Panc1 (cell line): ENCODE measurements at regions of chr12 and their contacts with region 1.

Region 1: GRCh38 chr12:98644711-98645402 is at the starts of genes APAF1 and IKBIP:
- DNase-seq: peak; percentile 74
- ATAC-seq: peak; percentile 95
- H3K4me3 ChIP-seq: peak within 1 kb of the TSS; percentile 86 to 87
- H3K27ac ChIP-seq: peak within 1 kb of the TSS; percentile 79
- H3K4me1 ChIP-seq: no peaks in the 10 kb centered on the region; the same call in 1 of the 2 replicates
- H3K27me3 ChIP-seq: no peaks in the 10 kb centered on the region
- CTCF ChIP-seq: no peak; the same call in 1 of the 2 replicates
- total RNA-seq, gene APAF1: 15.6 TPM
- total RNA-seq, gene IKBIP: 33.7 TPM

Region 2: DNA sequence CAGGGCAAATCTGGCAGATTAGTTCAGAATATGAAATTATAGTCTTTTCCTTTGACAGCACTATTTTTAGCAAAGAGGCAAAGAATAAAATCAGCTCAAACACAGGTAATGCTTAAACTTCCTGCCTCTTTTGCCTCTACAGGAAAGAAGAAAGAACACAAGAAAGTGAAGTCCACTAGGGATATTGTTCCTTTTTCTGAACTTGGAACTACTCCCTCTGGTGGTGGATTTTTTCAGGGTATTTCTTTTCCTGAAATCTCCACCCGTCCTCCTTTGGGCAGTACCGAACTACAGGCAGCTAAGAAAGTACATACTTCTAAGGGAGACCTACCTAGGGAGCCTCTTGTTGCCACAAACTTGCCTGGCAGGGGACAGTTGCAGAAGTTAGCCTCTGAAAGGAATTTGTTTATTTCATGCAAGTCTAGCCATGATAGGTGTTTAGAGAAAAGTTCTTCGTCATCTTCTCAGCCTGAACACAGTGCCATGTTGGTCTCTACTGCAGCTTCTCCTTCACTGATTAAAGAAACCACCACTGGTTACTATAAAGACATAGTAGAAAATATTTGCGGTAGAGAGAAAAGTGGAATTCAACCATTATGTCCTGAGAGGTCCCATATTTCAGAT is 112.1 kb before region 1 on chr12:
- CTCF ChIA-PET with region 1: no interaction called
- POLR2A ChIA-PET with region 1: no interaction called
- in situ Hi-C with region 1: no loop called
- intact Hi-C with region 1: no loop called
- DNase-seq: no peak
- ATAC-seq: peak; percentile 90
- H3K4me3 ChIP-seq: no peak overlapping the region
- H3K27ac ChIP-seq: no peak overlapping the region; the same call in 1 of the 2 replicates
- H3K4me1 ChIP-seq: no peaks in the 10 kb centered on the region
- H3K27me3 ChIP-seq: no peaks in the 10 kb centered on the region
- CTCF ChIP-seq: peak; percentile 82

Region 3: GRCh38 chr12:98671459-98671858 is 26.6 kb after region 1 on chr12:
- CTCF ChIA-PET with region 1: interaction called, 4 read pairs
- POLR2A ChIA-PET with region 1: interaction called, 10 read pairs
- in situ Hi-C with region 1: no loop called
- intact Hi-C with region 1: no loop called
- DNase-seq: no peak
- ATAC-seq: no peak
- H3K4me3 ChIP-seq: no peak overlapping the region
- H3K27ac ChIP-seq: no peak overlapping the region
- H3K4me1 ChIP-seq: no peaks in the 10 kb centered on the region
- H3K27me3 ChIP-seq: no peaks in the 10 kb centered on the region
- CTCF ChIP-seq: no peak

Region 4: GRCh38 chr12:98883231-98883630 is 238.4 kb after region 1 on chr12:
- CTCF ChIA-PET with region 1: no interaction called
- POLR2A ChIA-PET with region 1: no interaction called
- in situ Hi-C with region 1: no loop called
- intact Hi-C with region 1: no loop called
- DNase-seq: no peak
- ATAC-seq: no peak
- H3K4me3 ChIP-seq: no peak overlapping the region
- H3K27ac ChIP-seq: no peak overlapping the region
- H3K4me1 ChIP-seq: no peaks in the 10 kb centered on the region
- H3K27me3 ChIP-seq: peaks cover 2% of the 10 kb centered on the region
- CTCF ChIP-seq: no peak